GM12878 (cell line): ENCODE measurements at regions of chr19 and their contacts with region 1.

Region 1: GRCh38 chr19:35468637-35469036 is 20.6 kb downstream of the FFAR2 start:
- DNase-seq: peak; percentile 82
- ATAC-seq: peak; percentile 100
- H3K4me3 ChIP-seq: no peak overlapping the region
- H3K27ac ChIP-seq: 0 out of 2 replicates have a peak overlapping the region, but pooled peaks have one; percentile 6
- H3K4me1 ChIP-seq: peaks cover 9% of the 10 kb centered on the region
- H3K27me3 ChIP-seq: no peaks in the 10 kb centered on the region
- CTCF ChIP-seq: peak; percentile 85 to 96 (median 93); a peak in 5 of 6 replicates
- EP300 ChIP-seq: peak in 1 of 2 experiments; percentile 65; a peak in 2 of 4 replicates
- POLR2A ChIP-seq: no peak
- RAD21 ChIP-seq: peak; percentile 99

Region 2: GRCh38 chr19:35347171-35347929 is 121.3 kb before region 1 on chr19 and contains the start of gene FFAR1:
- CTCF ChIA-PET with region 1: interaction called, 168 read pairs
- POLR2A ChIA-PET with region 1: interaction called, 35 read pairs
- RAD21 ChIA-PET with region 1: interaction called, 143 read pairs
- SMC1A ChIA-PET with region 1: interaction called, 134 read pairs
- in situ Hi-C with region 1: loop called (anchors 5 kb)
- intact Hi-C with region 1: loop called (anchors 1 kb)
- DNase-seq: peak; percentile 96
- ATAC-seq: peak; percentile 74
- H3K4me3 ChIP-seq: no peak within 1 kb of the TSS; the same call in 1 of the 2 replicates
- H3K27ac ChIP-seq: peak within 1 kb of the TSS; percentile 97
- H3K4me1 ChIP-seq: peaks cover 56% of the 10 kb centered on the region
- H3K27me3 ChIP-seq: no peaks in the 10 kb centered on the region
- CTCF ChIP-seq: no peak
- EP300 ChIP-seq: peak in 1 of 2 experiments; percentile 66; a peak in 2 of 4 replicates
- POLR2A ChIP-seq: peak; percentile 72
- RAD21 ChIP-seq: no peak
- polyA plus RNA-seq, gene FFAR1: 0.05 to 0.07 TPM

Region 3: GRCh38 chr19:35375505-35376307 is 92.9 kb before region 1 on chr19:
- CTCF ChIA-PET with region 1: interaction called, 7 read pairs
- POLR2A ChIA-PET with region 1: interaction called, 16 read pairs
- RAD21 ChIA-PET with region 1: interaction called, 37 read pairs
- SMC1A ChIA-PET with region 1: interaction called, 22 read pairs
- in situ Hi-C with region 1: no loop called
- intact Hi-C with region 1: no loop called
- DNase-seq: no peak
- ATAC-seq: peak; percentile 36; the same call in 2 of the 3 replicates
- H3K4me3 ChIP-seq: no peak overlapping the region
- H3K27ac ChIP-seq: peak overlapping the region; percentile 51; the same call in 1 of the 2 replicates
- H3K4me1 ChIP-seq: peaks cover 31% of the 10 kb centered on the region
- H3K27me3 ChIP-seq: no peaks in the 10 kb centered on the region
- CTCF ChIP-seq: no peak
- EP300 ChIP-seq: no peak
- POLR2A ChIP-seq: no peak
- RAD21 ChIP-seq: no peak

Region 4: DNA sequence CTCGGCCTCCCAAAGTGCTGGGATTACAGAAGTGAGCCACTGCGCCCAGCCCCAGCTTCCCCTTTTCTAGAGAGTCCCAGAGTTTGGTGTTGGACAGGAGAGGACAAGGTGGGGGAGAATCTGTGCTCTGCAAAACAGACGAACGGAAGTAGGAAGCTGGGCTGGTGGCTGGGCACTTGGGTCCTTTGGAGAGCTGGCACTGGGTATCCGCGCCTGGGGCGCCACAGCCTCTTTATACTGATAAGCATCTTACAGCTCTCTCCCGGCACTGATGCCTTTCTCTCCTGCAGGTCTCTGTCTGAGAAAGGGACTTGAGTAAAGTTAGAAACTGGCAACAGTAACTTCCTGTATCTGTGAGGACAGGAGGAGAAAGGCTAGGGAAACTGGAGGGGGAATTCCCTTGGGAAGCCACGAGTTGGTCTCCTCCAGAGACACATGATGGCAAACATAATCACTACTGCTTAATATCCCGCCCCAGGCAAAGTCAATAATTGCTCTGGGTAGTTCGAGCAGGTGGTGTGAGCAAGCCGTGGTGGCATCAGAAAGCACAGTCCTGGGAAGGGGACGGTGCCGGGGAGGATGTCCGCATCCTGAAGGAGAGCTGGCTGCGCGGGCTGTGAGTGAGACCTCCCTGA is 19.5 kb before region 1 on chr19:
- CTCF ChIA-PET with region 1: interaction called, 11 read pairs
- POLR2A ChIA-PET with region 1: interaction called, 35 read pairs
- RAD21 ChIA-PET with region 1: interaction called, 67 read pairs
- SMC1A ChIA-PET with region 1: interaction called, 109 read pairs
- in situ Hi-C with region 1: no loop called
- intact Hi-C with region 1: no loop called
- DNase-seq: no peak
- ATAC-seq: no peak
- H3K4me3 ChIP-seq: 0 out of 2 replicates have a peak overlapping the region, but pooled peaks have one; percentile 4
- H3K27ac ChIP-seq: no peak overlapping the region
- H3K4me1 ChIP-seq: peaks cover 56% of the 10 kb centered on the region
- H3K27me3 ChIP-seq: no peaks in the 10 kb centered on the region
- CTCF ChIP-seq: no peak
- EP300 ChIP-seq: no peak
- POLR2A ChIP-seq: no peak
- RAD21 ChIP-seq: no peak

Region 5: DNA sequence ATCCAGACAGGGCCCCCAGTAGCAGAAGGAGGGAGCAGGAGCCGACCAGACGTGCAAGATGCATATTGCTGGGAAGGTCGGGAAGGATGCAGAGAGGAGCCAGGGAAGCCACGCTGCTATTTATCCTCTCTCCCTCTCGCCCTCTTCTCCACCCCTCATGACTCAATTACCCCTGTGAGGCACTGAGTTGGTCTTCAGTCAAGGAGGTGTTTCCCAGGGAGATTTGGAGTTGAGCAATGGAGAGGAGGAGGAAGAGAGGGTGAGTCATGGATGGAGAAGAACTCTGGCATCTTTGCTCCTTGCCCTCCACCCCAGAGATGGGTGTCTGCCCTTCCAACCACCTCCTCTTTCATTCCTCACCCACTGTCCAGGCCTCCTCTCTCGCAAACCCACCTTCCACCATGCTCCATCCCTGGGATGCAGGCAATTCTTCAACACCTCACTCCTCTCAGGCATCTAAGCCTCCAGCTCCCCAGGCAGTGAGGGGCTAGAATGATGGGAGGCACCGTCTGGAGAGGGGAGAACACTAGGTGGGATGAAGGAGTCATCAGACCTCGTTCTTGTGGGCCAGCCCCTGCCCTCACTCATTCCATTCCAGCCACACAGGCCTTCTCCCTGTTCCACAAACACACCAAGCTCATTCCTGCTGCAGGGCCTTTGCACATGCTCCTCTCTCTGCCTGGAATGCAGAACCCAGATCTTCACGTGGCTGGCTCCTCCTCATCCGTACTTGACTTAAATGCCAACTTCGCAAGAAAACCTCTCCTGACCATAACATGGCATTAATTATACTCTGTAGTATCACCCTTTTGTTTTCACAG is 59.8 kb after region 1 on chr19 and contains the start of gene SBSN:
- CTCF ChIA-PET with region 1: no interaction called
- POLR2A ChIA-PET with region 1: no interaction called
- RAD21 ChIA-PET with region 1: no interaction called
- SMC1A ChIA-PET with region 1: no interaction called
- in situ Hi-C with region 1: no loop called
- intact Hi-C with region 1: no loop called
- DNase-seq: no peak
- ATAC-seq: no peak
- H3K4me3 ChIP-seq: no peak within 1 kb of the TSS
- H3K27ac ChIP-seq: no peak within 1 kb of the TSS
- H3K4me1 ChIP-seq: peaks cover 2% of the 10 kb centered on the region; the same call in 1 of the 2 replicates
- H3K27me3 ChIP-seq: peaks cover 0 to 13% of the 10 kb centered on the region in 2 experiments; a peak in 3 of 4 replicates
- CTCF ChIP-seq: no peak
- EP300 ChIP-seq: no peak
- POLR2A ChIP-seq: no peak
- RAD21 ChIP-seq: no peak
- polyA plus RNA-seq, gene SBSN: not detected